GM12878 (cell line): ENCODE measurements at regions of chr4 and their contacts with region 1.

Region 1: GRCh38 chr4:47122592-47123291 is 91.4 kb downstream of the GABRB1 start:
- DNase-seq: peak; percentile 21
- ATAC-seq: peak; percentile 94
- H3K4me3 ChIP-seq: no peak overlapping the region
- H3K27ac ChIP-seq: no peak overlapping the region
- H3K4me1 ChIP-seq: no peaks in the 10 kb centered on the region
- H3K27me3 ChIP-seq: no peaks in the 10 kb centered on the region
- CTCF ChIP-seq: peak; percentile 84 to 91 (median 90)
- EP300 ChIP-seq: 0 out of 4 replicates have a peak, but pooled peaks of 1 of the 2 experiments have one; percentile 24
- POLR2A ChIP-seq: no peak
- RAD21 ChIP-seq: peak; percentile 83

Region 2: DNA sequence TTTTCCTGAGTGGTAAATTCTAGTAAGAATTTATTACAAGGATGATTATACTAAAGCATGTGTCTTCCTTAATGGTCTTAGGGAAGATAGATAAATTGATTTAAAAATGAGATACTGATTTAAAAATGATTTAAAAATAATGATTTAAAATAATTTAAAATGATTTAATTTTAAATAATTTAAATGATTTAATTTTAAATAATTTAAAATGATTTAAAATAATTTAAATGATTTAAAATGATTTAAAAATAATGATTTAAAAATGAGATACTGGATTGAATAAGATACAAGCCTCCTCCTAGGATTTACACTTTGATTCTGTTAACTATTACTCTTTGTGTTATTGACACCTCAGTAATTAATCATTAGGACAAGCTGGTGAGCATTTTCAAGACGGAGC is 272.7 kb before region 1 on chr4:
- CTCF ChIA-PET with region 1: interaction called, 13 read pairs
- POLR2A ChIA-PET with region 1: no interaction called
- RAD21 ChIA-PET with region 1: interaction called, 19 read pairs
- SMC1A ChIA-PET with region 1: interaction called, 29 read pairs
- in situ Hi-C with region 1: no loop called
- intact Hi-C with region 1: loop called (anchors 2 kb)
- DNase-seq: no peak
- ATAC-seq: no peak
- H3K4me3 ChIP-seq: no peak overlapping the region
- H3K27ac ChIP-seq: no peak overlapping the region
- H3K4me1 ChIP-seq: no peaks in the 10 kb centered on the region
- H3K27me3 ChIP-seq: no peaks in the 10 kb centered on the region
- CTCF ChIP-seq: no peak
- EP300 ChIP-seq: no peak
- POLR2A ChIP-seq: no peak
- RAD21 ChIP-seq: no peak

Region 3: DNA sequence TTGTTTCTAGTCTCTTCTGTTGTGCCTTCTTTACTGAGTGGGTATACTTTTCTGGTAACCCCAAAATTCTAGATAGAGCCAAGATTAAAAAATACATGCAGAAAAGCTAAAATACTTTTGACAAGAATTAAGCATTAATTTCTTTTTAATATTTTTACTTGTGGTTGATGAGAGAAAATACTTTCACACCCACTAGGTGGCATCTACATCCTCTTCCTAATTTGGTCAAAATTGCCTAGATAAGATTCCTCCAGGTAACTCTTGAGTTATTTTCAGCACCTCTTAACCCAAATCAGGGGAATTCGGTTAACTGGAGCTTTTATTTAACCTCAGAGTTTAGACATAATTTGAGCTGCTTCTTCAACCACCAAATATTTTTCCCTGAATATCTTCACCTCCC is 185.2 kb before region 1 on chr4:
- CTCF ChIA-PET with region 1: interaction called, 64 read pairs
- POLR2A ChIA-PET with region 1: no interaction called
- RAD21 ChIA-PET with region 1: interaction called, 25 read pairs
- SMC1A ChIA-PET with region 1: interaction called, 62 read pairs
- in situ Hi-C with region 1: no loop called
- intact Hi-C with region 1: loop called (anchors 2 kb)
- DNase-seq: no peak
- ATAC-seq: 0 out of 3 replicates have a peak, but pooled peaks have one; percentile 42
- H3K4me3 ChIP-seq: no peak overlapping the region
- H3K27ac ChIP-seq: no peak overlapping the region
- H3K4me1 ChIP-seq: no peaks in the 10 kb centered on the region
- H3K27me3 ChIP-seq: no peaks in the 10 kb centered on the region
- CTCF ChIP-seq: peak in 2 of 3 experiments; percentile 12 to 41; a peak in 2 of 6 replicates
- EP300 ChIP-seq: no peak
- POLR2A ChIP-seq: no peak
- RAD21 ChIP-seq: peak; percentile 50

Region 4: GRCh38 chr4:47038263-47038662 is 84.5 kb before region 1 on chr4:
- CTCF ChIA-PET with region 1: interaction called, 33 read pairs
- POLR2A ChIA-PET with region 1: interaction called, 5 read pairs
- RAD21 ChIA-PET with region 1: interaction called, 18 read pairs
- SMC1A ChIA-PET with region 1: interaction called, 24 read pairs
- in situ Hi-C with region 1: no loop called
- intact Hi-C with region 1: no loop called
- DNase-seq: no peak
- ATAC-seq: no peak
- H3K4me3 ChIP-seq: no peak overlapping the region
- H3K27ac ChIP-seq: no peak overlapping the region
- H3K4me1 ChIP-seq: no peaks in the 10 kb centered on the region
- H3K27me3 ChIP-seq: no peaks in the 10 kb centered on the region; a peak in 1 of 4 replicates
- CTCF ChIP-seq: no peak
- EP300 ChIP-seq: no peak
- POLR2A ChIP-seq: no peak
- RAD21 ChIP-seq: no peak

Region 5: DNA sequence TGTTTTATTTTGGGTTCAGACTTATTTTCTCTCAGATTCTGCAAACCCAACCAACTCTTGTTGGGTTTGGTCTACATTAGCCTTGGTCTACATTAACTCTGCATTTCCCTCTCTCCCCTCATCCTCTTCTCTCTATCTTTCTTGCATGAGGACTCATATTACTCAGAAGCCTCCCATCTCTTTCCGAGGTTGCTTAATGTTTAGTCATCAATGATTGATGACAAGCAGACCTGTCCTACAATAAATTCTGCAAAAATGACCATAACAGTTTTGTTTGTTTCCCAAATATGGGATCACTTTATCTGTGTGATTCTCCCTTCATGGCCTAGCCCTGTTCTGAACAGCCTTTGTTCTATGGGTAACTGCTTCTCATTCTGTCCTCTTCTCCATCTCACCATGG is 16.2 kb before region 1 on chr4:
- CTCF ChIA-PET with region 1: interaction called, 101 read pairs
- POLR2A ChIA-PET with region 1: interaction called, 4 read pairs
- RAD21 ChIA-PET with region 1: interaction called, 54 read pairs
- SMC1A ChIA-PET with region 1: interaction called, 59 read pairs
- in situ Hi-C with region 1: no loop called
- intact Hi-C with region 1: no loop called
- DNase-seq: no peak
- ATAC-seq: no peak
- H3K4me3 ChIP-seq: no peak overlapping the region
- H3K27ac ChIP-seq: no peak overlapping the region
- H3K4me1 ChIP-seq: no peaks in the 10 kb centered on the region
- H3K27me3 ChIP-seq: no peaks in the 10 kb centered on the region
- CTCF ChIP-seq: no peak
- EP300 ChIP-seq: no peak
- POLR2A ChIP-seq: no peak
- RAD21 ChIP-seq: no peak

Region 6: DNA sequence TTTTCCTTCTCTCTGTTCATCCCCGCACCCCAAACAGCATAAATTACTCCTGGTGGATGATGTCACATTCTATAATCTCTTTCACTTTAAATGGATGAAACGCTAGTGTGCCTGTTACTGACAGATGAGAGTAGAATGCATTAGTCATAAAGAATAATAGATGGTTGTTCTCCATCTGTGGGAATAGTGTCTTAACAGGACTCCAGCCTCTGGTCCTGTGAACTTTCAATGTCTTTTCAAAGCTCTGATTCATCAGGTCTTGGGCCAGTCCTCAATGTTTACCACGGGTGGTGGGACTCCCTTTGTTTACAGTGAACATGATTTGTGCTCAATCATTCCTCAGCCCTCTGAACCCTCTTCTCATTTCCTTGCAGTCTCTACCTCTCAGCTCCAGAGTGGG is 91.2 kb after region 1 on chr4:
- CTCF ChIA-PET with region 1: interaction called, 9 read pairs
- POLR2A ChIA-PET with region 1: no interaction called
- RAD21 ChIA-PET with region 1: interaction called, 10 read pairs
- SMC1A ChIA-PET with region 1: no interaction called
- in situ Hi-C with region 1: no loop called
- intact Hi-C with region 1: no loop called
- DNase-seq: no peak
- ATAC-seq: no peak; the same call in 2 of the 3 replicates
- H3K4me3 ChIP-seq: no peak overlapping the region
- H3K27ac ChIP-seq: no peak overlapping the region
- H3K4me1 ChIP-seq: no peaks in the 10 kb centered on the region
- H3K27me3 ChIP-seq: no peaks in the 10 kb centered on the region
- CTCF ChIP-seq: no peak
- EP300 ChIP-seq: no peak
- POLR2A ChIP-seq: no peak
- RAD21 ChIP-seq: no peak